ENCODE measurements at regions of chr11 and their contacts with region 1.

Region 1: GRCh38 chr11:6443269-6444003 is 2.6 kb upstream of the HPX start:
- DNase-seq: peak; percentile 69 to 77 (median 76)
- ATAC-seq: peak; percentile 93
- H3K4me3 ChIP-seq: no peak overlapping the region
- H3K27ac ChIP-seq: no peak overlapping the region
- H3K4me1 ChIP-seq: peaks cover 9 to 10% of the 10 kb centered on the region in 2 experiments; a peak in 3 of 5 replicates
- H3K27me3 ChIP-seq: 0 out of 5 replicates have a peak, but pooled peaks cover 0 to 2% of the 10 kb centered on the region in 2 experiments
- CTCF ChIP-seq: peak; percentile 86 to 92 (median 86)
- EP300 ChIP-seq: no peak
- POLR2A ChIP-seq: no peak
- RAD21 ChIP-seq: peak; percentile 74 to 76

Region 2: GRCh38 chr11:6377902-6378639 is 65.4 kb before region 1 on chr11:
- CTCF ChIA-PET with region 1: interaction called, 21 read pairs
- POLR2A ChIA-PET with region 1: interaction called, 5 read pairs
- in situ Hi-C with region 1: loop called (anchors 5 kb)
- intact Hi-C with region 1: loop called (anchors 1 kb)
- DNase-seq: no peak
- ATAC-seq: peak; percentile 62
- H3K4me3 ChIP-seq: no peak overlapping the region
- H3K27ac ChIP-seq: no peak overlapping the region
- H3K4me1 ChIP-seq: peaks cover 0 to 6% of the 10 kb centered on the region in 2 experiments; a peak in 2 of 5 replicates
- H3K27me3 ChIP-seq: peaks cover 15 to 23% of the 10 kb centered on the region in 2 experiments; a peak in 3 of 5 replicates
- CTCF ChIP-seq: no peak
- EP300 ChIP-seq: no peak
- POLR2A ChIP-seq: no peak
- RAD21 ChIP-seq: no peak

Region 3: GRCh38 chr11:6411594-6412031 is 31.8 kb before region 1 on chr11:
- CTCF ChIA-PET with region 1: no interaction called
- POLR2A ChIA-PET with region 1: no interaction called
- in situ Hi-C with region 1: no loop called
- intact Hi-C with region 1: no loop called
- DNase-seq: no peak
- ATAC-seq: no peak
- H3K4me3 ChIP-seq: no peak overlapping the region
- H3K27ac ChIP-seq: no peak overlapping the region
- H3K4me1 ChIP-seq: peaks cover 2 to 9% of the 10 kb centered on the region in 2 experiments; a peak in 2 of 5 replicates
- H3K27me3 ChIP-seq: peaks cover 35 to 56% of the 10 kb centered on the region in 2 experiments
- CTCF ChIP-seq: no peak
- EP300 ChIP-seq: no peak
- POLR2A ChIP-seq: no peak
- RAD21 ChIP-seq: no peak

Region 4: DNA sequence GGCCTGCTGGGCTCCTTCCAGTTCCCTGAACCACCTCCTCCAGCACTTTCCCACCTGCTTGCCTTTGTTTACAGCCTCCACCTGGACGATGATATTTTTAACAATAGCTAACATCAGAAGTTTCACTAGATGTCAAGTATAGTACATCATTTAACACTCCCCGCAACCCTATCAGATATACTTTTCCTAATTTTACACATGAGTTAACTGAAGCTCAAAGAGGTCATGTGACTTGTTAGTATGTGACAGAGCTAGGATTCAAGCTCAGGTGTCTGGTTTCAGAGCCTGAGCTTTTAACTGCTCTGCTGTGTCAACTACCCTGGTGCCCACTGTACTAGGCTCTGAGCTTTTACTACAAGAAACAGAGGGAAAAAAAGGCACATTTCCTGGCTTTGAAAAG is 11.6 kb after region 1 on chr11:
- CTCF ChIA-PET with region 1: no interaction called
- POLR2A ChIA-PET with region 1: interaction called, 11 read pairs
- in situ Hi-C with region 1: no loop called
- intact Hi-C with region 1: no loop called
- DNase-seq: no peak
- ATAC-seq: no peak
- H3K4me3 ChIP-seq: no peak overlapping the region
- H3K27ac ChIP-seq: no peak overlapping the region
- H3K4me1 ChIP-seq: no peaks in the 10 kb centered on the region
- H3K27me3 ChIP-seq: no peaks in the 10 kb centered on the region
- CTCF ChIP-seq: no peak
- EP300 ChIP-seq: no peak
- POLR2A ChIP-seq: no peak
- RAD21 ChIP-seq: no peak

Region 5: DNA sequence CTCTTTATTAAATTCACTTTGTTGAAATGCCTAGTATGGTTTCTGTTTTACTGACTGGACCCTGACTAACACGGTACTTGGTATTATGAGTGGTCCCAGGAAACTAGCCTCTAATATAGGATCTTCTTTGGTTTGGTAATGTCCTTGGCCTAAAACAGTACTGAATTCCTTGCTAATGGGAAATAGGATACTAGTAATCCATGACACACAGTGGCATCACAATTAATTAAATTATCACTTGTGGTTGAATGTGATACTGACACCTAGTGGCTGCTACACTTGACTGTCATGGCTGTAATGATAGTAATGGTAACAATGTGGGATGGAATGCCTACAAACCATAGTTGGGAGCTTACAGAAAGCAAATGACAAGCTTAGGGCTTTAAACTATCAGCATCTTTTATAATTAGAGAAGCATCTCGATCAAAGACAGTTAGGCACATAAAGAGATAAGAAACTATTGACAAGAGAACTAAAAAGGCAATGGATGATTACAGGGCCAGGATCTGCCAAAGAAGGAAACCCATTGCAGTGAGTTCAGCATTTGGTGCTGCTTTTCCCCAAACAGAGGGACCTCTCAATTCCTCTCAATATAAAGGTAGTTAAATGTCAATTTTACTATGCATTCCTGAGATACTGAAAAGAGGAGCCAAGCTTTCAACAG is 62.3 kb after region 1 on chr11:
- CTCF ChIA-PET with region 1: interaction called, 3 read pairs
- POLR2A ChIA-PET with region 1: no interaction called
- in situ Hi-C with region 1: no loop called
- intact Hi-C with region 1: loop called (anchors 1 kb)
- DNase-seq: peak; percentile 32 to 53 (median 34)
- ATAC-seq: peak; percentile 86
- H3K4me3 ChIP-seq: no peak overlapping the region
- H3K27ac ChIP-seq: no peak overlapping the region
- H3K4me1 ChIP-seq: no peaks in the 10 kb centered on the region
- H3K27me3 ChIP-seq: no peaks in the 10 kb centered on the region
- CTCF ChIP-seq: peak; percentile 61 to 78 (median 77); a peak in 5 of 6 replicates
- EP300 ChIP-seq: no peak
- POLR2A ChIP-seq: no peak
- RAD21 ChIP-seq: peak; percentile 46 to 69

Region 6: GRCh38 chr11:6705905-6706535 is 262.6 kb after region 1 on chr11:
- CTCF ChIA-PET with region 1: no interaction called
- POLR2A ChIA-PET with region 1: no interaction called
- in situ Hi-C with region 1: no loop called
- intact Hi-C with region 1: loop called (anchors 5 kb)
- DNase-seq: peak; percentile 54 to 64 (median 58)
- ATAC-seq: peak; percentile 78
- H3K4me3 ChIP-seq: no peak overlapping the region
- H3K27ac ChIP-seq: no peak overlapping the region
- H3K4me1 ChIP-seq: no peaks in the 10 kb centered on the region
- H3K27me3 ChIP-seq: no peaks in the 10 kb centered on the region
- CTCF ChIP-seq: peak; percentile 81 to 89 (median 81)
- EP300 ChIP-seq: no peak
- POLR2A ChIP-seq: no peak
- RAD21 ChIP-seq: peak; percentile 81 to 89

Region 7: GRCh38 chr11:6841694-6842093 is 398.3 kb after region 1 on chr11:
- CTCF ChIA-PET with region 1: no interaction called
- POLR2A ChIA-PET with region 1: no interaction called
- in situ Hi-C with region 1: no loop called
- intact Hi-C with region 1: no loop called
- DNase-seq: no peak
- ATAC-seq: no peak
- H3K4me3 ChIP-seq: no peak overlapping the region
- H3K27ac ChIP-seq: no peak overlapping the region
- H3K4me1 ChIP-seq: no peaks in the 10 kb centered on the region
- H3K27me3 ChIP-seq: no peaks in the 10 kb centered on the region
- CTCF ChIP-seq: no peak
- EP300 ChIP-seq: no peak
- POLR2A ChIP-seq: no peak
- RAD21 ChIP-seq: no peak